ENCODE measurements at regions of chr2 and their contacts with region 1.

Region 1: DNA sequence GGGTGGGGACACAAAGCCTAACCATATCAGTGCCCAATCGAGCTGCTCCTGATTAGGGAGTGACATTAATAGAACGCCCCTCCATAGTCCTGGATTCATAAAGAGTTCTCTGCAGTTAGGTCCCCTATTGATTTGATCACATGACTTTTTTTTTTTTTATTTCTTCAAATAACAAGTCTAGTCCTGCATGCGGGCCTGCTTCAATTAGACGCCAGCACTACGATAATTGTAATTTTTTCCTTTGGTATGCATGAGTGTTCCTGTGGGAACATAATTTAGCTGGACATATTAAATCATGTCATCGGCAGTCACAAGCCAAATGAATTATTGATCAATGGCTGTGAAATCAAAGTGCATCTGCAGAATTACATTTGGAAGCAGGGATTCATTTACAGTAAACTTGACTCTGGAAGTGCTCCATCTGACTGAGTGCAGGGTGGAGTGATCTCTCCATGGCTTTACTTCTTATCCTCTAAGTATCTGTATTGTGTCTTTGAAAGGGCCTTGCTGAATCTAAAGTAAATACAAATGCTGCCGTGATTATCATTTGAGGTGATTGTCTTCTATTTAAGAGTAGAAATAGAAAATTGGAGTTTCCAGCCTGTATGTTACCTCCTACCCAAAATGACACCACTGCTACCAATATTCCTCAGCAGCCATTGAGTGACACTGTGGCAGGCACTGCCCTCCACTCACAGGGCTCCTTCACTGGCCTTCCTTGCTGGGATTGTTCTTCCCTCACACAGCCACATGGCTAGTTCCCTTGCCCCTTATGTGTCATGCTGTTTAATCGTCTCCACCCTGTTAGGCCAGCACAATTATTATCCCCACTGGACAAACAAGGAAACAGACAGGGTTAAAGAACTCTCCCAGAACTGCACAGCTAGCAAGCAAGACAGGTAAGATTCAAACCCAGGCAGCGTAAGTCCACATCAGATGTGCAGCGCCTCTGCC is 337.4 kb upstream of the ID2 start:
- DNase-seq: no peak
- H3K4me3 ChIP-seq: no peak overlapping the region
- H3K27ac ChIP-seq: no peak overlapping the region
- H3K4me1 ChIP-seq: no peaks in the 10 kb centered on the region
- H3K27me3 ChIP-seq: no peaks in the 10 kb centered on the region
- CTCF ChIP-seq: no peak

Region 2: GRCh38 chr2:8534729-8535468 is 190.5 kb after region 1 on chr2:
- CTCF ChIA-PET with region 1: no interaction called
- dilution Hi-C with region 1: loop called (anchors 5 kb)
- in situ Hi-C with region 1: no loop called
- intact Hi-C with region 1: no loop called
- DNase-seq: no peak
- H3K4me3 ChIP-seq: no peak overlapping the region
- H3K27ac ChIP-seq: no peak overlapping the region
- H3K4me1 ChIP-seq: no peaks in the 10 kb centered on the region
- H3K27me3 ChIP-seq: no peaks in the 10 kb centered on the region
- CTCF ChIP-seq: no peak

Region 3: GRCh38 chr2:8851811-8852560 is 507.6 kb after region 1 on chr2:
- CTCF ChIA-PET with region 1: no interaction called
- dilution Hi-C with region 1: no loop called
- in situ Hi-C with region 1: no loop called
- intact Hi-C with region 1: no loop called
- DNase-seq: no peak
- H3K4me3 ChIP-seq: no peak overlapping the region
- H3K27ac ChIP-seq: no peak overlapping the region
- H3K4me1 ChIP-seq: peaks cover 3% of the 10 kb centered on the region
- H3K27me3 ChIP-seq: no peaks in the 10 kb centered on the region
- CTCF ChIP-seq: no peak

Measured in mammary epithelial cell (primary cell).